H1 (cell line): ENCODE measurements at regions of chr3 and their contacts with region 1.

Region 1: GRCh38 chr3:141412087-141412935 is 44.0 kb downstream of the ZBTB38 start:
- DNase-seq: no peak
- H3K4me3 ChIP-seq: no peak overlapping the region
- H3K27ac ChIP-seq: no peak overlapping the region
- H3K4me1 ChIP-seq: no peaks in the 10 kb centered on the region; a peak in 2 of 7 replicates
- H3K27me3 ChIP-seq: peaks cover 5 to 19% (median 13%) of the 10 kb centered on the region in 4 experiments; a peak in 6 of 7 replicates
- CTCF ChIP-seq: no peak
- EP300 ChIP-seq: no peak
- POLR2A ChIP-seq: no peak
- RAD21 ChIP-seq: no peak

Region 2: DNA sequence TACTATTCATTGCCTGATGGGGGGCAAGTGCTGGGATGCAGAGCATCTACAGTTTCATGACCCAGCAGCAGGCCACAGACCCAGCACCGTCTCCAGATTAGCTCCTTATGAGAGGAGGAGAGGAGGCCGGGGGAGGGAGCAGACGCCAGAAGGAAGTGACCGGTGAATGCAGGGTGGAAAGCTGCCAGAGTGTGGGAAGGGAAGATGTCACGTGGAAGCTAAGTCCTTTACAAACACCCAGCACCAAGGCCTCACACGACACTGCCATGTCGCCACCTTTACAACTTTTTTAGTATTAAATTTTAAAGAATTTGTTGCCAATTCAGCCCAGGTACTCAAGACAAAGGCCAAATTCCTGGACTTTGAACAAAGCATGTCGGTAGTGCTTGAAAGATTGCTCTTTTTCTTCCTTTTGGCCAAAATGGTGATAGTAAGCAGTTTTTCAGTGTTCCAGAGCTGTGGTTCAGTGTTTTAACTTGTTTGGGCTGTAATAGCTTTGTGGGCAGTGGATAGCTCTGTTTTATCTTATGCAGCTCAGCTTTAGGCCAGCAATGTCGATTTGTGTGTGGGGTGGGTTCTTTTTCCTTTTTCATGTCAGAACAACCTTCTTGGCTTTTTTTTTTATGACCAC is 14.2 kb after region 1 on chr3:
- CTCF ChIA-PET with region 1: interaction called, 28 read pairs
- POLR2A ChIA-PET with region 1: interaction called, 6 read pairs
- DNase-seq: no peak
- H3K4me3 ChIP-seq: no peak overlapping the region
- H3K27ac ChIP-seq: no peak overlapping the region
- H3K4me1 ChIP-seq: peaks cover 0 to 8% (median 3%) of the 10 kb centered on the region in 4 experiments; a peak in 4 of 7 replicates
- H3K27me3 ChIP-seq: no peaks in the 10 kb centered on the region
- CTCF ChIP-seq: no peak
- EP300 ChIP-seq: no peak
- POLR2A ChIP-seq: no peak
- RAD21 ChIP-seq: no peak